B cell (primary cell): ENCODE measurements at regions of chr6 and their contacts with region 1.

Region 1: GRCh38 chr6:52995913-52996645 is 995 bp upstream of the GSTA4 start:
- DNase-seq: peak; percentile 76
- ATAC-seq: no peak
- H3K4me3 ChIP-seq: peak overlapping the region; percentile 14 to 58 (median 47)
- H3K4me3 Mint-ChIP-seq: peak overlapping the region; percentile 98
- H3K27ac ChIP-seq: peak overlapping the region; percentile 43 to 95
- H3K27ac Mint-ChIP-seq: peak overlapping the region; percentile 100
- H3K4me1 ChIP-seq: peaks cover 8 to 14% of the 10 kb centered on the region in 2 donors
- H3K4me1 Mint-ChIP-seq: peaks cover 23% of the 10 kb centered on the region
- H3K27me3 ChIP-seq: no peaks in the 10 kb centered on the region
- H3K27me3 Mint-ChIP-seq: peaks cover 4% of the 10 kb centered on the region
- CTCF ChIP-seq: no peak

Region 2: GRCh38 chr6:52419809-52420670 is 576.0 kb before region 1 on chr6 and contains the start of gene EFHC1:
- CTCF ChIA-PET with region 1: interaction called, 3 read pairs
- POLR2A ChIA-PET with region 1: no interaction called
- intact Hi-C with region 1: loop called (anchors 1 kb)
- DNase-seq: peak; percentile 99
- ATAC-seq: peak; percentile 90
- H3K4me3 ChIP-seq: peak within 1 kb of the TSS; percentile 67 to 90 (median 86)
- H3K4me3 Mint-ChIP-seq: no peak within 1 kb of the TSS
- H3K27ac ChIP-seq: peak within 1 kb of the TSS; percentile 58 to 84
- H3K27ac Mint-ChIP-seq: no peak within 1 kb of the TSS
- H3K4me1 ChIP-seq: peaks cover 16 to 20% of the 10 kb centered on the region in 2 donors
- H3K4me1 Mint-ChIP-seq: peaks cover 11% of the 10 kb centered on the region
- H3K27me3 ChIP-seq: no peaks in the 10 kb centered on the region
- H3K27me3 Mint-ChIP-seq: peaks cover 1% of the 10 kb centered on the region
- CTCF ChIP-seq: no peak
- total RNA-seq, gene EFHC1: 34.8 and 45.7 TPM in 2 replicates

Region 3: DNA sequence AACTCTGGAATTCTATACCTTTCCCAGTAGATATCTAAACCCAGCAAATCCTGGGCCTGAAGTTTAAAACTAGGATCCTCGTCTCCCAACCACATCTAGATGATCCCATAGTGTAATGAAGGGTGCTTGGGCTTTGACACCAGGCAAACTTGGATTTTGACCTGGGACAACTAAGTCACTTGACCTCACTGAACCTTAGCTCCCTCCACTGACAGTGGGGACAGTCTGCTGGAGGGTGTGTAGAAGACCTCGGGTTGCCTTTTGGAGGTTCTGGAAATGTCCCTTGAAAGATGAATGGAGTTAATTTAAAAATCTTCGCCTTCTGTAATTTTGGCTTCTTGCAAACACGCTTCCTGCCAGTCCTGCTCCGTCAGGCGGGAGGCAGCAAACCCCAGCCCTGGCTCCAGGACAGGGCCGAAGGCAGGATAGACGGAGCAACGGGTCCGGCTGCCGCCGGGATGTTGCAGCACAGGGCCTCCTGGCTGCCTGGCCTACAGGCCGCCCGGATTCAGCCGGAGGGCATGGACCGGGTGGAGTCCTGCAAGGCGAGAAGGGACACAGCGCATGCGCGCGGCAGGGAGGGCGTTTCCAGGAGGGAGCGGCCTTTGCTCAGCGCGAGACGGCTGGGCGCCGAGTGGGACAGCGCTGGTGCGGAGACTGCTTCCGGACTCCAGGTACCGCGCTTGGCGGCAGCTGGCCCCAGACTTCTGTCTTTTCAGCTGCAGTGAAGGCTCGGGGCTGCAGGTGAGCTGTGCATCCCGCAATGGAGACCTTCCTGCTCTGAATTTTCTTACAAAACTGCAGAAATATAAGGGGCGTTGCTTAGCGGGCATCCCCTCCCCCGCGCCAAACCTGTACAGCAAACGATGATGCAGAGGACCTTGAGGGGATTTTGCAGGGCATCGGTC is 325.3 kb before region 1 on chr6 and contains the start of gene TMEM14A:
- CTCF ChIA-PET with region 1: no interaction called
- POLR2A ChIA-PET with region 1: no interaction called
- intact Hi-C with region 1: loop called (anchors 1 kb)
- DNase-seq: peak; percentile 92
- ATAC-seq: peak; percentile 98
- H3K4me3 ChIP-seq: peak within 1 kb of the TSS; percentile 59 to 86 (median 67)
- H3K4me3 Mint-ChIP-seq: peak within 1 kb of the TSS; percentile 91
- H3K27ac ChIP-seq: no peak within 1 kb of the TSS
- H3K27ac Mint-ChIP-seq: peak within 1 kb of the TSS; percentile 81
- H3K4me1 ChIP-seq: peaks cover 20 to 23% of the 10 kb centered on the region in 2 donors
- H3K4me1 Mint-ChIP-seq: peaks cover 40% of the 10 kb centered on the region
- H3K27me3 ChIP-seq: no peaks in the 10 kb centered on the region
- H3K27me3 Mint-ChIP-seq: no peaks in the 10 kb centered on the region
- CTCF ChIP-seq: no peak
- total RNA-seq, gene TMEM14A: 5.9 and 9.5 TPM in 2 replicates

Region 4: GRCh38 chr6:52829046-52829817 is 166.8 kb before region 1 on chr6:
- CTCF ChIA-PET with region 1: no interaction called
- POLR2A ChIA-PET with region 1: no interaction called
- intact Hi-C with region 1: no loop called
- DNase-seq: no peak
- ATAC-seq: no peak
- H3K4me3 ChIP-seq: no peak overlapping the region
- H3K4me3 Mint-ChIP-seq: no peak overlapping the region
- H3K27ac ChIP-seq: no peak overlapping the region
- H3K27ac Mint-ChIP-seq: no peak overlapping the region
- H3K4me1 ChIP-seq: no peaks in the 10 kb centered on the region
- H3K4me1 Mint-ChIP-seq: no peaks in the 10 kb centered on the region
- H3K27me3 ChIP-seq: no peaks in the 10 kb centered on the region
- H3K27me3 Mint-ChIP-seq: peaks cover 13% of the 10 kb centered on the region
- CTCF ChIP-seq: no peak

Region 5: DNA sequence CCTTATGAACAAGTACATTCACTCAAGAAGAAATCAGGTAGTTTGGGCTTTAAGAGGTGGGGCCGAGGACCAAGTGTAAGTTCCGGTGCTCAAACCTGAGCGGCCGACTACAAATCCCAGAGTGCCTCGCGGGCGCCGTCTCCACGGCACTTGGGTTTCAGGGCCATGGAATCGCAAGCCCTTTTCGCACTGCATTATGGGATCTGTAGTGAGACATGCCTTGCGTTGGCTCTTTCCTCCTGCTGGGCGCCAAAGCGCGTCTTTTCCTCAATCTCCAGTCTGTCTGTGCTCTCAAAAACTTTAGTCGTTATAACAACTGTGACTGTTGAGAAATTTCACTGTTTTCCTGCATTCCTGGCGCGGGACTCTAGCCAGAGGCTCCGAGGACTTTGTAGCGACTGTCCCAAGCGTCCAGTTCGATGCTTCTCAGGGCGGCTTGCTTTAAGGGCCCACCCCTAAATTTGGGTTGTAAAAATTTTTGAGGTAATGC is 68.7 kb after region 1 on chr6:
- CTCF ChIA-PET with region 1: interaction called, 12 read pairs
- POLR2A ChIA-PET with region 1: interaction called, 5 read pairs
- intact Hi-C with region 1: no loop called
- DNase-seq: peak; percentile 96
- ATAC-seq: peak; percentile 82
- H3K4me3 ChIP-seq: peak overlapping the region; percentile 83 to 99 (median 84)
- H3K4me3 Mint-ChIP-seq: peak overlapping the region; percentile 100
- H3K27ac ChIP-seq: peak overlapping the region; percentile 61 to 76
- H3K27ac Mint-ChIP-seq: peak overlapping the region; percentile 99
- H3K4me1 ChIP-seq: peaks cover 38 to 40% of the 10 kb centered on the region in 2 donors
- H3K4me1 Mint-ChIP-seq: peaks cover 63% of the 10 kb centered on the region
- H3K27me3 ChIP-seq: no peaks in the 10 kb centered on the region
- H3K27me3 Mint-ChIP-seq: no peaks in the 10 kb centered on the region
- CTCF ChIP-seq: no peak

Region 6: DNA sequence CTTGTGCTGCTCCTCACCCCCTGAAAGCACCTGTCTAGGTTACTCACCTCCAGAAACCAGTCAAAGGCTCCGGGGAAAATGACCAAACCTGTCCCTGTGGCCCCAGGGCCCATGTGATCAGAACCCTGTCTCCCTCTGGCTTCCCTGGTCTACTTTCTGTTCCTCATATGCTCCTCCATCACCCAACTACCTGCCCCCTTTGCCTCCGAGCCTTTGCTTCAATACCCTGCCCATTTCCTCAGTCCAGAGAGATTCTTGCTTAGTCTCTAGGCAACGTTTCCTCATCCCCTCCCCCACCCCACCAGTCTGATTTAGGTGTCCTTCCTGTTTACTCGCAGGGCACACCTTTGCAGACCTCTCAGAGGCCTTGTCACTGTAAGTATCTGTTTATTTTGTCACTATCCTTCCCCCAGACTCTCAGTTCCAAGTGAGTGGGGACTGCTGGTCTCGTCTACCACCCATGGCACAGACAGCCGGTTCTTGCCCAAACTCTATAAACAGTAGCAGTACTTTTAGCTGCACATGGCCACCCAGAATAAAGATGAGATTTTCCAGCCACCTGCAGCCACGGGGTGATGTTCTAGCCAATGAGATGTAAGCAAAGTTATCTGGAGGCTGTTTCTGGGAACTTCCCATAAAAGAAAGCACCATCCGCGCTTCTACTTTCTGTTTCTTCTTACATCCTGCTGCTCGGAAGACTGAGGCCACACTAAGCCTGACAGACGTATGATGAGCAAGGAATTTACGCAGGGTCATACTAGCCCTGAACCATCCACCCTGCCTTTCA is 339.3 kb after region 1 on chr6:
- CTCF ChIA-PET with region 1: no interaction called
- POLR2A ChIA-PET with region 1: no interaction called
- intact Hi-C with region 1: loop called (anchors 5 kb)
- DNase-seq: peak; percentile 93
- ATAC-seq: peak; percentile 88
- H3K4me3 ChIP-seq: peak overlapping the region; percentile 38 to 79 (median 58)
- H3K4me3 Mint-ChIP-seq: peak overlapping the region; percentile 80
- H3K27ac ChIP-seq: peak overlapping the region; percentile 98
- H3K27ac Mint-ChIP-seq: peak overlapping the region; percentile 97
- H3K4me1 ChIP-seq: peaks cover 81 to 89% of the 10 kb centered on the region in 2 donors
- H3K4me1 Mint-ChIP-seq: peaks cover 88% of the 10 kb centered on the region
- H3K27me3 ChIP-seq: no peaks in the 10 kb centered on the region
- H3K27me3 Mint-ChIP-seq: no peaks in the 10 kb centered on the region
- CTCF ChIP-seq: no peak

Region 7: GRCh38 chr6:53437557-53438202 is 441.6 kb after region 1 on chr6:
- CTCF ChIA-PET with region 1: no interaction called
- POLR2A ChIA-PET with region 1: no interaction called
- intact Hi-C with region 1: no loop called
- DNase-seq: peak; percentile 51
- ATAC-seq: peak; percentile 73
- H3K4me3 ChIP-seq: no peak overlapping the region
- H3K4me3 Mint-ChIP-seq: no peak overlapping the region
- H3K27ac ChIP-seq: no peak overlapping the region
- H3K27ac Mint-ChIP-seq: peak overlapping the region; percentile 32
- H3K4me1 ChIP-seq: peaks cover 0 to 13% of the 10 kb centered on the region in 2 donors
- H3K4me1 Mint-ChIP-seq: peaks cover 23% of the 10 kb centered on the region
- H3K27me3 ChIP-seq: no peaks in the 10 kb centered on the region
- H3K27me3 Mint-ChIP-seq: no peaks in the 10 kb centered on the region
- CTCF ChIP-seq: peak; percentile 60

Region 8: DNA sequence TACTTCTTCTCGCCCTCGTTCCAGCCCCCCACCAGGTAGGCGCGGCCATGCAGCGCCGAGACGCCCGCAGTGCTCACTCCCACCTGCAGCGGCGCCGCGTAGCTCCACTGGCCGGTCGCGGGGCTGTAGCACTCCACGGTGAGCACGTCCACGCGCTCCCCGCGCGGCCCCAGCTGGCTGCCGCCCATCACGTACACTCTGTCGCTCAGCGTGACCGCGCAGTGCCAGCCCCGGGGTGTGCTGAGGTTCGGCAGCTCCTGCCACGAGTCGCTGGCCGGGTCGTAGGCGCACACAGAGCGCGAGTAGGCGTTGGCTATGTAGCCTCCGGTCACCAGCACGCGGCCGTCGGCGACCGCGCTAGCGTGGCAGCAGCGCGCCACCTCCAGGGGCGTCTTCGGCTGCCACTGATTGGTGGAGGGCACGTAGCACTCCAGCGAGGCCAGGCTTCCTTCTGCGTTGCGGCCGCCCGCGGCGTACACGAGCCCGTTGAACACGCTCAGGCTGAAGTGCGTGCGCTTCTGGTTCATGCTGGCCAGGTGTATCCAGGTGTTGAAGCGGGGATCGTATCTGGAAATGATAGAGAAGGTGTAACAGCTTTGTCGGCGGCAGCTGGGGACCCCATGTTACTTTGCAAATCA is 655.8 kb after region 1 on chr6:
- CTCF ChIA-PET with region 1: no interaction called
- POLR2A ChIA-PET with region 1: no interaction called
- intact Hi-C with region 1: loop called (anchors 5 kb)
- DNase-seq: peak; percentile 87
- ATAC-seq: peak; percentile 83
- H3K4me3 ChIP-seq: peak overlapping the region; percentile 64 to 96 (median 79)
- H3K4me3 Mint-ChIP-seq: peak overlapping the region; percentile 96
- H3K27ac ChIP-seq: peak overlapping the region; percentile 9 to 51
- H3K27ac Mint-ChIP-seq: peak overlapping the region; percentile 90
- H3K4me1 ChIP-seq: peaks cover 20 to 26% of the 10 kb centered on the region in 2 donors
- H3K4me1 Mint-ChIP-seq: peaks cover 20% of the 10 kb centered on the region
- H3K27me3 ChIP-seq: peaks cover 0 to 6% (median 0%) of the 10 kb centered on the region in 4 experiments
- H3K27me3 Mint-ChIP-seq: no peaks in the 10 kb centered on the region
- CTCF ChIP-seq: peak; percentile 24

Region 9: GRCh38 chr6:54173089-54173488 is 1177.0 kb after region 1 on chr6:
- CTCF ChIA-PET with region 1: no interaction called
- POLR2A ChIA-PET with region 1: no interaction called
- intact Hi-C with region 1: no loop called
- DNase-seq: no peak
- ATAC-seq: no peak
- H3K4me3 ChIP-seq: no peak overlapping the region
- H3K4me3 Mint-ChIP-seq: no peak overlapping the region
- H3K27ac ChIP-seq: no peak overlapping the region
- H3K27ac Mint-ChIP-seq: no peak overlapping the region
- H3K4me1 ChIP-seq: no peaks in the 10 kb centered on the region
- H3K4me1 Mint-ChIP-seq: no peaks in the 10 kb centered on the region
- H3K27me3 ChIP-seq: no peaks in the 10 kb centered on the region
- H3K27me3 Mint-ChIP-seq: no peaks in the 10 kb centered on the region
- CTCF ChIP-seq: no peak